ENCODE measurements at regions of chr3 and their contacts with region 1.

Region 1: DNA sequence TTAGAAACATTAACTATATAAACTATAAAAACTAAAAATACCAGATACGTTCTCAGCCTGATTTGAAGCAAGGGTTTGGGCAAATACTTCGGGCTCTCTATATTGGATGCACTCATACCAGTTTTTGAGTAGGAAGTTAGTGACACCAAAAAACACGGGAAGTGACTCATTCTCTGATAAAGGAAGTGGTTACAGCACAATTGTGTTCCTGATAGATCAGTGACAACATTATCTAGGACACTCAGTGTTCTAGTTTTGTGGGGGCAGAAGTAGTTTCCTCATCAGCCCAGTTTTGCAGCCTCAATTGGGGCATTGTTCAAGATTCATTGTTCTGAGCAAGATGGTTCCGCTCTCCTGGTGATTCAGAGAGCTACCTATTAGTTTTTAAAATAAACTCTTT is 469.6 kb upstream of the DPPA4 start:
- DNase-seq: peak; percentile 77
- ATAC-seq: peak; percentile 85
- H3K4me3 ChIP-seq: no peak overlapping the region
- H3K27ac ChIP-seq: peak overlapping the region; percentile 31
- H3K4me1 ChIP-seq: peaks cover 13% of the 10 kb centered on the region
- H3K27me3 ChIP-seq: no peaks in the 10 kb centered on the region
- CTCF ChIP-seq: no peak

Region 2: GRCh38 chr3:110314512-110315114 is 507.7 kb after region 1 on chr3:
- CTCF ChIA-PET with region 1: no interaction called
- POLR2A ChIA-PET with region 1: no interaction called
- intact Hi-C with region 1: loop called (anchors 10 kb)
- DNase-seq: peak; percentile 88
- ATAC-seq: peak; percentile 80
- H3K4me3 ChIP-seq: no peak overlapping the region
- H3K27ac ChIP-seq: no peak overlapping the region
- H3K4me1 ChIP-seq: peaks cover 10% of the 10 kb centered on the region
- H3K27me3 ChIP-seq: no peaks in the 10 kb centered on the region
- CTCF ChIP-seq: peak; percentile 90

Measured in PC-3 (cell line).